ENCODE measurements at regions of chr16 and their contacts with region 1.

Region 1: DNA sequence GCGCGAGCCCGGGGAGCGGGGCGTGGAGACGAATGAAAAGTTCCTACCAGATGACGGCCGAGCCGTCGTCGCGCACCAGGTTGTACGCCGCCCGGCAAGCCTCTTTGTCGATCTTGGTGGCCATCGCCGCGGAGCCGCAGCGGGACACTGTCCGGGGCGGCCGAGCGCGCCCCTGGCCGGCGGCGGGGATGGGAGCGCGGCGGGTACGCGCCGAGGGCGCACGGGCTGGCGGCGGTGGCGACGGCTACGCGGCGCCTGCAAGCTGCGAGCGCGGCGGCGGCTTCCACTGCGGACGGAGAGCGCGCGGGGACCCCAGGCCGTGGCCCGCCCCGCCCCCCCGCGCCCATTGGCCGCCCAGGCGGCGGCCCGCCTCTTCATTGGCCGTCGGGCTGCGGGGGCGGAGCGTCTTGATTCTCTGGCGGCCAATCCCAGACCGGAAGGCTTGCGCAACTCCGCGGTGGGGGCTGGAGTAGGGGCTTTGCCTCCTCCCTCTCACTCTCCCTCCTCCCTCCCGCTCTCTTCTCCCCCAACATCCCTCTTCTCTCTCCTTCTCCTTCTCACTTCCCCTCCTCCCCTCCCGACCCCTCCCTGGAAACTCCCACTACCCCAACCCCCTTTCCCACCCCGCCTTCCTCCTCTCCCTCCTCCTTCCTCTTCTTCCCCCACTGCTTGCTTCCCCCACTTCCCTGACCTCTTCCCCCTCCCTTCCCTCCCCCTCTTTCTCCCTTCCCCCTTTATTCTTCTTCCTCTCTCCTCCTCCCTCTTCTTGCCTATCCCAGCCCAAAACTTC is at the start of gene COTL1:
- DNase-seq: peak; percentile 86
- ATAC-seq: peak; percentile 87
- H3K4me3 Mint-ChIP-seq: peak within 1 kb of the TSS; percentile 94
- H3K27ac Mint-ChIP-seq: peak within 1 kb of the TSS; percentile 84
- H3K4me1 Mint-ChIP-seq: peaks cover 77% of the 10 kb centered on the region
- H3K27me3 Mint-ChIP-seq: no peaks in the 10 kb centered on the region
- CTCF ChIP-seq: no peak
- total RNA-seq, gene COTL1: 487 and 525 TPM in 2 replicates

Region 2: DNA sequence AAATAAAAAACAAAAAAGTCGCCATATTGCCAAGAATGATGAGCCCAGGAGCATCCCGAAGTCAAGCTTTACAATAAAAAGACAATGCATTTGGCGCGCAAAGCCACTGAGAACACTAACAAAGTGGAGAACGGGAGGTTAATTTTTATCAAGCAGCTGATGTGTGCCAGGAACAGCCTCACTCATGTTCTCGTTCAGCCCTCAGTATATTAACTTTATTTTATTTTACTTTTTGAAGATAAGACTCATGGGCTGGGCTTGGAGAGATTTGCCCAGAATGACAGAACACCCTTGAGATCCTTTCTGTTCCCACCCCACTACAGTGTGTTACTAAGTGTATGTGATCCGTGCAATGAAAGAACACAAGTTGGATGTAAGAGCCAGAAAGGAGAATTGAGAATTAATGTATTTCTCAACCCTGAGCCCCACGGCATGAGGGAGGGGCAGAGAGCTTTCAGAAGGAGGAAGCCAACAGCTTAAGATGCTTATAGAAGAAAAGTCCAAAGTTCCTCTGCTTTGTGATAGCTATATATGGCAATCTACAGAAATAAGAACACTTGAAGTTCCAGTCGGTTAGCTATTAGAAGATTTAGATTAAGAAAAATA is 48.5 kb before region 1 on chr16:
- CTCF ChIA-PET with region 1: interaction called, 10 read pairs
- POLR2A ChIA-PET with region 1: interaction called, 6 read pairs
- intact Hi-C with region 1: no loop called
- DNase-seq: no peak
- ATAC-seq: peak; percentile 72
- H3K4me3 Mint-ChIP-seq: no peak overlapping the region
- H3K27ac Mint-ChIP-seq: peak overlapping the region; percentile 64
- H3K4me1 Mint-ChIP-seq: peaks cover 50% of the 10 kb centered on the region
- H3K27me3 Mint-ChIP-seq: no peaks in the 10 kb centered on the region
- CTCF ChIP-seq: no peak

Region 3: DNA sequence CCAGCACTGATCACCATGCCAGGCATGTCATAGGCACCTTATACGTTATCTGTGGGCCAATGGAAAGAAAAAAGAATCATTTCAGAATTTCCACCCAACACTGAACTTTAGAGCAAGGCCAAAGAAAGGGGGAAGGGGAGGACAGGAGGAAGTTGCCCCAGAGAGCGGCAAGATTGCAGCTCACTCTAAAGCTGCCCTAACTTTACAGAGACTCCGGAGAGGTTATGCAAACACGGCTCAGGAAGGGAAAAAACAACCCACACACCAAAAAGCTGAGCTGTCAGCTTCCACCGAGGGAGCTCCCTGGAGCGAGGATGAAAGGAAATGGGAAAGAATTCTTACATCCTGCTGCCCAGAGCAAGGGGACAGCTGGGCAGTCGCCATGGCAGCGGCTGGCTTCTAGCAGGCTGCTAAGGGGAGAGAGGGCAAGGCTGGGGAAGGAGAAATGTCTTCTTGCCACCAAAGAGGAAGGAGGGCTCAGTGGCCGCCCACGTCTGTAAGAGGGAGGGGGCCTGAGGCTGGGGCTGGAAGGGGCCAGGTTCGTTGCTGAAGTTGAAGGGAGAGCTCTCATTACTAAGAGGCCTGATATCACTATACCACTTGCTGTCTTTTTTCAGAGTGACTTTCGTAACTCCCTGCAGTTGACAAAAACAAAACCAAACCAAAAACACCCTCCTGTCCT is 18.3 kb before region 1 on chr16:
- CTCF ChIA-PET with region 1: interaction called, 9 read pairs
- POLR2A ChIA-PET with region 1: interaction called, 333 read pairs
- intact Hi-C with region 1: loop called (anchors 1 kb)
- DNase-seq: peak; percentile 55
- ATAC-seq: peak; percentile 40
- H3K4me3 Mint-ChIP-seq: peak overlapping the region; percentile 82
- H3K27ac Mint-ChIP-seq: peak overlapping the region; percentile 97
- H3K4me1 Mint-ChIP-seq: peaks cover 94% of the 10 kb centered on the region
- H3K27me3 Mint-ChIP-seq: no peaks in the 10 kb centered on the region
- CTCF ChIP-seq: no peak

Region 4: DNA sequence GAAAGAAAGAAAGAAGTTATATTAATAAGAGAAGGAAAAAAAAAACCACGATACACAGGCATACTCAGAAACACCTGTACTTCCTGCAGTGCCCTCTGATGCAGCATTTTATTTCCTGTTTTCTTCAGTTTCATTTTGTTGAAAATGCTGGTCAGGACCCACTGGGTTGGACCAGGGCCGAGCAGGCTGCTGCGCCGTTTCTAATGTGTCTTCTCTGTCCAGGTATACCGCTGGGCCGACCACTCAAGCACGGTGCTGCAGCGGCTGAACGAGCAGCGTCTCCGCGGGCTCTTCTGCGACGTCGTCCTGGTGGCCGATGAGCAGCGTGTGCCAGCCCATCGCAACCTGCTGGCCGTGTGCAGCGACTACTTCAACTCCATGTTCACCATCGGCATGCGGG is 38.7 kb after region 1 on chr16:
- CTCF ChIA-PET with region 1: interaction called, 9 read pairs
- POLR2A ChIA-PET with region 1: no interaction called
- intact Hi-C with region 1: loop called (anchors 5 kb)
- DNase-seq: no peak
- ATAC-seq: peak; percentile 86
- H3K4me3 Mint-ChIP-seq: peak overlapping the region; percentile 15
- H3K27ac Mint-ChIP-seq: peak overlapping the region; percentile 77
- H3K4me1 Mint-ChIP-seq: peaks cover 36% of the 10 kb centered on the region
- H3K27me3 Mint-ChIP-seq: no peaks in the 10 kb centered on the region
- CTCF ChIP-seq: no peak

Region 5: GRCh38 chr16:84738255-84739038 is 120.5 kb after region 1 on chr16:
- CTCF ChIA-PET with region 1: interaction called, 65 read pairs
- POLR2A ChIA-PET with region 1: no interaction called
- intact Hi-C with region 1: loop called (anchors 1 kb)
- DNase-seq: peak; percentile 57
- ATAC-seq: peak; percentile 92
- H3K4me3 Mint-ChIP-seq: no peak overlapping the region
- H3K27ac Mint-ChIP-seq: peak overlapping the region; percentile 68
- H3K4me1 Mint-ChIP-seq: peaks cover 39% of the 10 kb centered on the region
- H3K27me3 Mint-ChIP-seq: no peaks in the 10 kb centered on the region
- CTCF ChIP-seq: peak; percentile 80

Region 6: GRCh38 chr16:84940670-84941551 is 322.9 kb after region 1 on chr16:
- CTCF ChIA-PET with region 1: no interaction called
- POLR2A ChIA-PET with region 1: no interaction called
- intact Hi-C with region 1: no loop called
- DNase-seq: no peak
- ATAC-seq: no peak
- H3K4me3 Mint-ChIP-seq: no peak overlapping the region
- H3K27ac Mint-ChIP-seq: no peak overlapping the region
- H3K4me1 Mint-ChIP-seq: no peaks in the 10 kb centered on the region
- H3K27me3 Mint-ChIP-seq: peaks cover 9% of the 10 kb centered on the region
- CTCF ChIP-seq: no peak

Region 7: DNA sequence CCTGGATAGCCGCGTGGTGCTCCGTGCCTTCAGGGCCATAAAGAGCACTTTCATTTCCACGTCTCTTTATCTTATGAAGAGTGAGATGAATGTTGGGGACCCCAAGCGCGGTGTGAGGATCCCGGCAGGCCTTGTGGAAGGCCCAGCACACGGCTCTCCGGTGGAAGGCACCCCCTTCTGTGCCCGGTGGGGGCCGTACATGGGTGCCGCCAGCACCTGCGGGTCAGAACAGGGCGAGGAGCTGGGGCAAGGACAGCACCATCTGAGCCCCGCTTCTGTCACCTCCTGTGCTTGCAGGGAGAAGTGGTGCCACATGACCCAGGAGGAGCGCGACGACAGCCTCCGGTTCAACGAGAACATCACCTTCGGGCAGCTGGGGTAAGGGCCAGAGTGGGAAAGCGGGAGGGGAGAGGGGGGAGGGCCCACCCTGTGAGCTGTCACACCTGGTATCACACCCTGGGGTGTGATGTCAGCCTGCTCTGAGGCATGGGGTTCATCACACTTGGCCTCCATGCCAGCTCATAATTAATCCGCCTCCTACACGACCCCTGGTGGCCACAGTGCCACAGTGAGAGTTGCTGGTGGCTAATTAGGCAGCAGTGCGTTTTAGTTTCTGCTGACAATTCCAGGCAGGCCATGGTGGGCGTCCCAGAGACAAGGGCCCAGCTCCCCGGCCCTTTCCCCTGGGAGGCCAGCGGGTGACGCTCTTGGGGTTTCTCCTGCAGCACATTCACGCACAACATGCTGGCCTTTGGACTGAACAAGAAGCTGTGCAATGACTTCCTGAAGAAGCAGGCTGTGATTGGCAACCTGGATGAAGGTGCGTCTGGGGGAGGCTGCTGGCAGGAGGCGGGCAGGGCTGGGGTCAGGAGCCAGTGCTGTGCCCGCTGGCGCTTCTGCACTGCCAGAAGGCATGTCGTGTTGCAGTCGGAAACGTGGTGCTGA is 468.6 kb after region 1 on chr16:
- CTCF ChIA-PET with region 1: no interaction called
- POLR2A ChIA-PET with region 1: no interaction called
- intact Hi-C with region 1: loop called (anchors 5 kb)
- DNase-seq: peak; percentile 54
- ATAC-seq: peak; percentile 83
- H3K4me3 Mint-ChIP-seq: no peak overlapping the region
- H3K27ac Mint-ChIP-seq: no peak overlapping the region
- H3K4me1 Mint-ChIP-seq: peaks cover 27% of the 10 kb centered on the region
- H3K27me3 Mint-ChIP-seq: peaks cover 17% of the 10 kb centered on the region
- CTCF ChIP-seq: no peak

Measured in activated B cell treated with CpG ODN at 0.5 μM for 24 hours (primary cell).